ENCODE measurements at regions of chr15 and their contacts with region 1.

Region 1: GRCh38 chr15:39171944-39172368 is 408.9 kb upstream of the THBS1 start:
- DNase-seq: peak; percentile 74 to 93
- ATAC-seq: peak; percentile 99 to 100
- H3K4me3 ChIP-seq: no peak overlapping the region
- H3K27ac ChIP-seq: peak overlapping the region; percentile 69 to 80
- H3K4me1 ChIP-seq: peaks cover 17% of the 10 kb centered on the region
- CTCF ChIP-seq: peak; percentile 66
- EP300 ChIP-seq: no peak
- POLR2A ChIP-seq: no peak
- RAD21 ChIP-seq: peak; percentile 94 to 97

Region 2: DNA sequence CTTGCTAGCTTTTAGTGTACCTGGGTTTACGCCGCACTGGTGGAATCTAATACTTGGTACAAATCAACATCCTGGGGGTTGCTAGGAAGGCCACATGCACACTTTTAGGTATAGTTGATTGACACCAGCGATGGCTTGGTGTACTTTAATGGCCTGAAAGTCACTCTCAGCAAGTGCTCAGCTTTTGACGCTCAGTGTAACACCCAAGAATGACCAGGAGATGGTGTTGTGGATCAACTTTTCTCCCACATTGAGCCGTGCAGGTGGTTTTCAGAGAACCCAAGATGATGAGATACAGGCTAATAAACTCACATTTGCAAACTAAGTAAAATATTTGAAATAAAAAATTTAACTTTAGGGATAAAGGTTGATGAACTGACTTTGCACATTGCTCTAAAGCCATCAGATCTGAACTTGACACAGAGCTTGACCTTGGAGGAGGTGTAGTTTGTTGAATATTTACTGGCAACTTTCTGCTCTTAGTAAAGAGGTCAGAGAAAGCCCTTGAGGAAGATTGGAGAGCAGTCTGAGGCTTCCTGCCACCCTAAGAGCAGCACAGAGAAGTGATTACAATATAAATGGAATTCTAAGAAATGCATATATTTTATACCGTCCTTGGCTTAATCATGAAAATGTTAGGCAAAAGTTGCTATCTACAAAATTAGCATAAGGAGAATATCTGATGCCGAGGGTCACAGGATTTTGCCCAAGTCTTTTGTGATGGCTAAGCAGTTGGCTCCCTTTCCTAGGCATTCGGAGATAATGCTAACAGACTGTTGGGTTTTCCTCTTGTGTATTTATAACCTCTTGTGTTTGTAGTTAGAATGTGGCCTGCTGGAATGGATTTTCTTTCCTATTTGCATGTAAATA is 463.9 kb before region 1 on chr15:
- CTCF ChIA-PET with region 1: interaction called, 11 read pairs
- POLR2A ChIA-PET with region 1: no interaction called
- DNase-seq: peak; percentile 25 to 57
- ATAC-seq: peak; percentile 84 to 91
- H3K4me3 ChIP-seq: no peak overlapping the region
- H3K27ac ChIP-seq: 0 out of 6 replicates have a peak overlapping the region, but pooled peaks of 1 of the 2 experiments have one; percentile 16
- H3K4me1 ChIP-seq: peaks cover 6% of the 10 kb centered on the region; the same call in 2 of the 3 replicates
- CTCF ChIP-seq: peak; percentile 81
- EP300 ChIP-seq: no peak
- POLR2A ChIP-seq: no peak
- RAD21 ChIP-seq: peak; percentile 84 to 92

Region 3: DNA sequence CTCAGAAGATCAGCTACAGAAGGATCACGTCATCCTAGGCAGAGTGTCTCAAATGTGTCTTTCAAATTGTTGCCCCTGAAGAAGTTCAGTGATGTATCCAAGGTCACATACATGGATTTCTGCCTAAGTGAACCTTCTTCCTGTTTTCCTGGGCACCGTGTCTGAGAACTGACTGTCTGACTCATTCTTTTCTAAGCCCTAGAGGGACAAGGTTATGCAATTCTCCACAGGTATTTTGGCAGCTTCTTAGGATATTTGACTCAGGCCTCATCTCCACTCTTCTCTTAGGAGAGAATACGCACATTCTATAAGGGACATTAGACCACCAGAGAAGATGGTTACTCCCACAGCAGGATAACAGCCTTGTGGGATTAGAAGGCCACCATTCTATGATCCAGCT is 17.0 kb after region 1 on chr15:
- CTCF ChIA-PET with region 1: interaction called, 21 read pairs
- POLR2A ChIA-PET with region 1: interaction called, 3 read pairs
- DNase-seq: peak; percentile 36 to 80
- ATAC-seq: peak; percentile 82 to 90
- H3K4me3 ChIP-seq: no peak overlapping the region
- H3K27ac ChIP-seq: peak overlapping the region; percentile 78 to 82
- H3K4me1 ChIP-seq: peaks cover 44% of the 10 kb centered on the region
- CTCF ChIP-seq: no peak
- EP300 ChIP-seq: peak; percentile 32 to 72; a peak in 2 of 5 replicates
- POLR2A ChIP-seq: no peak
- RAD21 ChIP-seq: peak; percentile 2 to 44; a peak in 2 of 5 replicates

Region 4: DNA sequence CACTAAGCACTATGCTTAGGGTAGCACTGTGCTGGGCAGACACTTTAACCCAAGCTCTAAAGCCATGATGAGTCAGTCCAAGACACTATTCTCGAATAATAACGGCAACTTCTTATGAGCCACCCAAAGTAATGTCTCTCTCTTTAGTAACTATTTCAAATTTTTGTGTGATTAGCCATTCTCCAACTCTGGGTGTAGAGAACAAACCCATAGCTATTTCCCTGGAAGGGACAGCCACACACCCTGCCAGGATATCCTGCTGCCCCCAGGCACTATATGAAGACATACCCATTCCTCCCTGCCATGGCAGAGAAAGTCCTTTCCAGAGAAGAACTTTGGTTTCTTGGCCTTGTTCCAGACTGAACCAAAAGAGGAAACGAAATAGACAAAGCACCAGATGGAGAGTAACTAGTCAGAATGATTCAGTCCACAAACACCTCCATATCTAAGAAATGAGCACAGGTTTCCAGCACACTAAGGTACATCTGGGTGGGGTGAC is 24.1 kb after region 1 on chr15:
- CTCF ChIA-PET with region 1: interaction called, 22 read pairs
- POLR2A ChIA-PET with region 1: no interaction called
- DNase-seq: peak; percentile 43 to 79
- ATAC-seq: peak; percentile 92 to 98
- H3K4me3 ChIP-seq: no peak overlapping the region
- H3K27ac ChIP-seq: peak overlapping the region; percentile 81 to 83
- H3K4me1 ChIP-seq: peaks cover 58% of the 10 kb centered on the region
- CTCF ChIP-seq: no peak
- EP300 ChIP-seq: peak; percentile 68 to 72; a peak in 3 of 5 replicates
- POLR2A ChIP-seq: no peak
- RAD21 ChIP-seq: peak in 1 of 2 experiments; percentile 54; a peak in 4 of 5 replicates

Measured in A549 (cell line).